ENCODE measurements at regions of chr9 and their contacts with region 1.

Region 1: DNA sequence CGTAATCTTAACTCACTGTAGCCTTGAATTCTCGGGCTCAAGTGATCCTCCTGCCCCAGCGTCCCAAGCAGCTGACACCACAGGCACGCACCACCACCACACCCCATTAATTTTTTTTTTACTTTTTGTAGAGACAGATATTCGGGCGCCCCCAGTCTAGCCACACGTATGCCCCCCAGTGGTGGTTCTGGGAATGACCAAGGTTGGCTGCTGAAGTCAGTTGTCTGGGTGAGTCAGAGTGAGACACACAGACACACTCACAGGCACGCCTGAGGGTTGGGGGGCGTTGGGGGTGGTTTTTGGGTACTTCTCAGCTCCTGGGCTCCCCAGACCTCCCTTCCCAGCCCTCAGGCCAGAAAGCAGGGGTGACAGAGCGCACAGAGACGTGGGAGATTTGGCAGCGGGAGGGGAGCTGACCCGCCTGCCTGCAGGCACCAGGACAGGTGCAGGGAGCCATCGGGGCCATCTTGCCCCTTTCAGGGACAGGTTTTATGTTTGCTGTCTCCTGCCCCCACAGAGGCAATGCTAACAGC is 4.2 kb upstream of the ENTPD8 start:
- DNase-seq: no peak
- H3K4me3 ChIP-seq: no peak overlapping the region
- CTCF ChIP-seq: peak; percentile 78

Region 2: GRCh38 chr9:137286975-137287383 is 158.4 kb before region 1 on chr9:
- CTCF ChIA-PET with region 1: interaction called, 12 read pairs
- POLR2A ChIA-PET with region 1: no interaction called
- DNase-seq: no peak
- H3K4me3 ChIP-seq: no peak overlapping the region
- CTCF ChIP-seq: peak; percentile 70

Region 3: GRCh38 chr9:137470785-137471184 is 25.4 kb after region 1 on chr9:
- CTCF ChIA-PET with region 1: no interaction called
- POLR2A ChIA-PET with region 1: no interaction called
- DNase-seq: no peak
- H3K4me3 ChIP-seq: no peak overlapping the region
- CTCF ChIP-seq: no peak